ENCODE measurements at regions of chr12 and their contacts with region 1.

Region 1: DNA sequence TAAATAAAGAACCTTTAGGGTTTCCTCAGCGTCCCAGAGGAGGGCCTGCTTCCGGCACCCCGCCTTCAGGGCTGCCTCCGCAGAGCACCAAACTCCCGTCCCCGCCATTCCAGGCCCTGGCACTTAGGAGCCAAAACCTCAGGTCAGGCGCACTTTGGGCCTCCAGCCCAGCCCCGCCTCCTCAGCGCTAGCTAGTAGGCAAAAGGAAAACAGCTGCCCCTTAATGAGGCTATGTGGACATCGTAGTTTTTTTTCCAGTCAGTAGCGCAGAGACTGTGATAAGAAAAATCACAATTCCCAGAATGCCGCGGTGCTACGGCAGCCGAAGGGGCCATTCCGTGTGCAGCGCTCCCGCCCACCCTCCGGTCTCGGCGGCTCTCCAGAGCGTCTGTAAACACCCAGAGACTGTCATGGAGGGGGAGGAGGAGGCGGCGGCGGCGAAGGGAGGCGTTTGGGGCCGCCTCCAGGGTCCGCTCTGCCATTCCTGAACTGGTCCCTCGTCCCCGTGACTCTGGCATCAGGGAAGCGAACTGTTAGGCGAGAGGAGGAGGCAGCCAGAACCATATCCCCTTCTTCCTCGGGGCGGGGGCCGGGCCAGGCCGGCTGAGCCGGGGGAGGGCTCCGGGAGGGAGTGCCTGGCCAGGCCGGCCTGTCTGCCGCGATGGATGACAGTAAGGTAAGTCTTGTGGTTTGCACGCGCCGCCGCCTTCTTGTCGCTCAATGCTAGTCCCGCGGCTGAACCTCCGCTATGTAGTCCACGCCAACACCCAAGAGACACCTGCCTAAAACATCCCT is at the start of gene CREBL2:
- DNase-seq: peak; percentile 75
- ATAC-seq: peak; percentile 91
- H3K4me3 Mint-ChIP-seq: peak within 1 kb of the TSS; percentile 94
- H3K27ac Mint-ChIP-seq: peak within 1 kb of the TSS; percentile 97
- H3K4me1 Mint-ChIP-seq: peaks cover 32% of the 10 kb centered on the region
- H3K27me3 Mint-ChIP-seq: no peaks in the 10 kb centered on the region
- CTCF ChIP-seq: no peak
- total RNA-seq, gene CREBL2: 10.1 and 10.8 TPM in 2 replicates

Region 2: DNA sequence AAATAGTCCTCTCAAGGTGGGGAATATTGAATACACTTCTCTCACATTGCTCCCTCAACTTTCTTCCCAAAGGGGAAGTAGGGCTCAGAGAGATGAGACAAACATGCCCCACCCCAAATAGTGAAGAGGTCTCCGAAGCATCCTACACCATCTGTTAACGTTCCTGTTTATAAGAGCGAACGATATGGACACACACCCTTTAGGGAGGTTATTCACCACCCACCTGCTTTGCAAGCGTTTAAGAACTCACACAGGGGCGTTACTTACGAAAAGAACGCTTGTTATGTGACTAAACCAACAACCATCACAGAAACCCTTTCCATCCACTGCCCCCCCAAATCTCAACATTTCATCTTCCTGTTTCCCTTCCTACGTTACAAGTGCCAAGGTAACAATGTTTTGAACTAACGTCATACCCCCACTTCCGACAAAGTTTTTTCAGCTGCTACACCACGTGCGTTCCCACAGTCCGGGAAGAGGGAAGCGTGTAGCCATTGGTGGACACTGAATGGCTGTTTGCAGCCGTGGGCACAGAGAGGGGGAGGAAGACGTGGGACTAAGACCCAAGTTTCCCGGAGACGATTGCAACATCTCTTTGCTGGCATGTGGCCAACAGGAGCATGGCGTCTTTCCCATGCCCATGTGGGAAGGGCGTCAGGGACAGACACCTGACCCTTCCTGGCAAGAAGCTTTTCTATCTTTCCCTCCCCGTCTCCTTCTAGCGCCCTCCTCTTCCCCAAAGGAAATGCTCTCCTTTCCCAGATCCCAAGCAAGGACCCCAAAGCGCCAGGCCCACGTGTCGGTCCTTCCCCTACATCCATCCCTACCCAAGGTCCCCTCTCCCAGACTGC is 1889.8 kb before region 1 on chr12:
- CTCF ChIA-PET with region 1: no interaction called
- POLR2A ChIA-PET with region 1: no interaction called
- intact Hi-C with region 1: loop called (anchors 5 kb)
- DNase-seq: peak; percentile 36
- ATAC-seq: peak; percentile 49
- H3K4me3 Mint-ChIP-seq: peak overlapping the region; percentile 88
- H3K27ac Mint-ChIP-seq: peak overlapping the region; percentile 91
- H3K4me1 Mint-ChIP-seq: peaks cover 33% of the 10 kb centered on the region
- H3K27me3 Mint-ChIP-seq: peaks cover 8% of the 10 kb centered on the region
- CTCF ChIP-seq: no peak

Region 3: DNA sequence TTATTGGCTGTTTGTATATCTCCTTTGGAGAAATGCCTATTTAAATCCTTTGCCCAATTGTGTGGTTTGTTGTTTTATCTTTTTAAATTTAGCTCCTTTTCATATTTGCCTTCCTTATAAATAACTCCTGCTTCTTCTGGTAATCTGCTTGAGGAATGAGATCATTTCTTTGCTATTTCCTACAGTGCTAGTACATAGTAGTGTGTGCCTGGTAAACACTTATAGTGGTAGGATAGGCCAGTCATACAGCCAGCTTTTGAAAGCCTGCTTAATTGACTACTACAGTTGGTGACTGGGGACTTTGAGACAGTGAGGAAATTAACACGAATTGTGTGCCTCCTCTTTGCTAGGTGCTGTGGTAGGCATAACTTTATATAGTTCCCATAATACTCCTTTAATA is 186.1 kb before region 1 on chr12:
- CTCF ChIA-PET with region 1: no interaction called
- POLR2A ChIA-PET with region 1: no interaction called
- intact Hi-C with region 1: no loop called
- DNase-seq: no peak
- ATAC-seq: no peak
- H3K4me3 Mint-ChIP-seq: no peak overlapping the region
- H3K27ac Mint-ChIP-seq: no peak overlapping the region
- H3K4me1 Mint-ChIP-seq: no peaks in the 10 kb centered on the region
- H3K27me3 Mint-ChIP-seq: no peaks in the 10 kb centered on the region
- CTCF ChIP-seq: no peak

Region 4: DNA sequence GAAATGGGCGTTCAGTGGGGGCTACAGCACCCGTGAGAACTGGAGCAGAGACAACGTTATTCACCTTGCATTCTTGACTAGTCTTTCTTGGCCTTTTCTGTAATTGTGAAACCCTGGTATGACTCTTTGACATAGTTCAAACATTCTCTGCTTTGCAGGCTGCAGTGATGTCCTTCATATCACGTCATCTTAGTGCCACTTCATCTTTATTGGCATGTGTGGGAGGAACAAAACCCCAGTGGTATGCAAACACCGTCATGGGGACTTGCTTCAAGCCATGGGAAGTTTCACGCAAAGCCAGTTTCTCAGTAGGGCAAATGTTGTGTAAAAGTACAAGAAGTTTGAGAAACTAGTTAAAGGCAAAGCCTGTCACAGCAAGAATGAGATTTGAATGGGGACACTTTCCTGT is 28.8 kb before region 1 on chr12:
- CTCF ChIA-PET with region 1: no interaction called
- POLR2A ChIA-PET with region 1: no interaction called
- intact Hi-C with region 1: loop called (anchors 2 kb)
- DNase-seq: no peak
- ATAC-seq: peak; percentile 92
- H3K4me3 Mint-ChIP-seq: no peak overlapping the region
- H3K27ac Mint-ChIP-seq: no peak overlapping the region
- H3K4me1 Mint-ChIP-seq: peaks cover 12% of the 10 kb centered on the region
- H3K27me3 Mint-ChIP-seq: no peaks in the 10 kb centered on the region
- CTCF ChIP-seq: no peak

Region 5: DNA sequence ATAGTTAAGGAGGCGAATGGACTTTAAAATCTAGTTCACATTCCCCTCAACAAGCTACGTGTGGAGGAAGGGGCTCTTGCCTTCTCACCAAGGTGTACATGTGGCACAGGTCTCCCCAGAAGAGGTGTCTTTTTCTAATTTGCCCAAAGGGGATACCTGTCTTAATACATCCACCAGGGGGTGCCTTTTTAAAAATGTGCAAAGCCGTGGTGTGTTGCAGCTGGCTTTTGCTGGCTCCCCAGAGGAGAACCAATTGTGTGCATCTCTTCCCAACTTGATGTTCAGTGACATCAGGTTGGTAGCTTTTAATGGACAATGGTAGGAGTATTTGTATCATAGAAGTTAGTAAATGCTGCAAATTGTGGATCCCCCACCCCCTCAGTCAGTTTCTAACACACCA is 33.8 kb after region 1 on chr12:
- CTCF ChIA-PET with region 1: no interaction called
- POLR2A ChIA-PET with region 1: no interaction called
- intact Hi-C with region 1: loop called (anchors 5 kb)
- DNase-seq: no peak
- ATAC-seq: peak; percentile 92
- H3K4me3 Mint-ChIP-seq: no peak overlapping the region
- H3K27ac Mint-ChIP-seq: no peak overlapping the region
- H3K4me1 Mint-ChIP-seq: peaks cover 9% of the 10 kb centered on the region
- H3K27me3 Mint-ChIP-seq: no peaks in the 10 kb centered on the region
- CTCF ChIP-seq: no peak

Region 6: DNA sequence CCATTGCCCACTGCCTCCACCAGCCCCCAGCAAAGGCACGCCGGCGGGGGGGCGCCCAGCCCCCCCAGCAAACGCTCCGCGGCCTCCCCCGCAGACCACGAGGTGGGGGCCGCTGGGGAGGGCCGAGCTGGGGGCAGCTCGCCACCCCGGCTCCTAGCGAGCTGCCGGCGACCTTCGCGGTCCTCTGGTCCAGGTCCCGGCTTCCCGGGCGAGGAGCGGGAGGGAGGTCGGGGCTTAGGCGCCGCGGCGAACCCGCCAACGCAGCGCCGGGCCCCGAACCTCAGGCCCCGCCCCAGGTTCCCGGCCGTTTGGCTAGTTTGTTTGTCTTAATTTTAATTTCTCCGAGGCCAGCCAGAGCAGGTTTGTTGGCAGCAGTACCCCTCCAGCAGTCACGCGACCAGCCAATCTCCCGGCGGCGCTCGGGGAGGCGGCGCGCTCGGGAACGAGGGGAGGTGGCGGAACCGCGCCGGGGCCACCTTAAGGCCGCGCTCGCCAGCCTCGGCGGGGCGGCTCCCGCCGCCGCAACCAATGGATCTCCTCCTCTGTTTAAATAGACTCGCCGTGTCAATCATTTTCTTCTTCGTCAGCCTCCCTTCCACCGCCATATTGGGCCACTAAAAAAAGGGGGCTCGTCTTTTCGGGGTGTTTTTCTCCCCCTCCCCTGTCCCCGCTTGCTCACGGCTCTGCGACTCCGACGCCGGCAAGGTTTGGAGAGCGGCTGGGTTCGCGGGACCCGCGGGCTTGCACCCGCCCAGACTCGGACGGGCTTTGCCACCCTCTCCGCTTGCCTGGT is 105.3 kb after region 1 on chr12 and contains the start of gene CDKN1B:
- CTCF ChIA-PET with region 1: no interaction called
- POLR2A ChIA-PET with region 1: interaction called, 10 read pairs
- intact Hi-C with region 1: loop called (anchors 1 kb)
- DNase-seq: peak; percentile 75
- ATAC-seq: peak; percentile 70
- H3K4me3 Mint-ChIP-seq: peak within 1 kb of the TSS; percentile 98
- H3K27ac Mint-ChIP-seq: peak within 1 kb of the TSS; percentile 97
- H3K4me1 Mint-ChIP-seq: peaks cover 67% of the 10 kb centered on the region
- H3K27me3 Mint-ChIP-seq: no peaks in the 10 kb centered on the region
- CTCF ChIP-seq: no peak
- total RNA-seq, gene CDKN1B: 56.6 and 59.0 TPM in 2 replicates

Region 7: DNA sequence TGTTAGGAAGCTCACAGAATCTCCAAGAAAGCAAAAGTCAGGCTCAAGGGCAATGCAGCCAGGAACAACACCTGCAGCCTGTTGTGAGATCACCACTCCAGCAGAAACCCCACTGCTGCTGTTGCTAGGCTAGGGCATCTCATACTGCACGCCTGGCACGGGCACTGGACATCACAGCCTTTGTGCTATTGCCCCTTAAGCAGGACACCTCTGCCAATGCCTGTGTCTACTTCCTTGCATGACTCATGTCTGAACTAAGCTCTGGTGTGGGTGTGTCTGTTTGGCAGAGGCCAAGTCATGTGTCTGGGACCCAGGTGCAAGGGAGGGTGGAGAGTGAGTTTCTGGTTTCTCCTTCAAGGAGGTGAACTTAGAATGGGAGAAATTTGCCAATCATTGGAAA is 191.5 kb after region 1 on chr12:
- CTCF ChIA-PET with region 1: no interaction called
- POLR2A ChIA-PET with region 1: no interaction called
- intact Hi-C with region 1: loop called (anchors 2 kb)
- DNase-seq: no peak
- ATAC-seq: peak; percentile 70
- H3K4me3 Mint-ChIP-seq: peak overlapping the region; percentile 12
- H3K27ac Mint-ChIP-seq: peak overlapping the region; percentile 6
- H3K4me1 Mint-ChIP-seq: peaks cover 65% of the 10 kb centered on the region
- H3K27me3 Mint-ChIP-seq: no peaks in the 10 kb centered on the region
- CTCF ChIP-seq: no peak

Measured in activated B cell treated with CpG ODN at 0.5 μM for 24 hours (primary cell).